ENCODE measurements at regions of chr17 and their contacts with region 1.

Region 1: GRCh38 chr17:29293890-29294579 is at the start of gene NUFIP2:
- DNase-seq: peak; percentile 98
- H3K4me3 Mint-ChIP-seq: peak within 1 kb of the TSS; percentile 99
- H3K27ac Mint-ChIP-seq: peak within 1 kb of the TSS; percentile 99
- H3K4me1 Mint-ChIP-seq: peaks cover 22% of the 10 kb centered on the region
- H3K27me3 Mint-ChIP-seq: no peaks in the 10 kb centered on the region
- total RNA-seq, gene NUFIP2: 83.3 and 85.7 TPM in 2 replicates

Region 2: DNA sequence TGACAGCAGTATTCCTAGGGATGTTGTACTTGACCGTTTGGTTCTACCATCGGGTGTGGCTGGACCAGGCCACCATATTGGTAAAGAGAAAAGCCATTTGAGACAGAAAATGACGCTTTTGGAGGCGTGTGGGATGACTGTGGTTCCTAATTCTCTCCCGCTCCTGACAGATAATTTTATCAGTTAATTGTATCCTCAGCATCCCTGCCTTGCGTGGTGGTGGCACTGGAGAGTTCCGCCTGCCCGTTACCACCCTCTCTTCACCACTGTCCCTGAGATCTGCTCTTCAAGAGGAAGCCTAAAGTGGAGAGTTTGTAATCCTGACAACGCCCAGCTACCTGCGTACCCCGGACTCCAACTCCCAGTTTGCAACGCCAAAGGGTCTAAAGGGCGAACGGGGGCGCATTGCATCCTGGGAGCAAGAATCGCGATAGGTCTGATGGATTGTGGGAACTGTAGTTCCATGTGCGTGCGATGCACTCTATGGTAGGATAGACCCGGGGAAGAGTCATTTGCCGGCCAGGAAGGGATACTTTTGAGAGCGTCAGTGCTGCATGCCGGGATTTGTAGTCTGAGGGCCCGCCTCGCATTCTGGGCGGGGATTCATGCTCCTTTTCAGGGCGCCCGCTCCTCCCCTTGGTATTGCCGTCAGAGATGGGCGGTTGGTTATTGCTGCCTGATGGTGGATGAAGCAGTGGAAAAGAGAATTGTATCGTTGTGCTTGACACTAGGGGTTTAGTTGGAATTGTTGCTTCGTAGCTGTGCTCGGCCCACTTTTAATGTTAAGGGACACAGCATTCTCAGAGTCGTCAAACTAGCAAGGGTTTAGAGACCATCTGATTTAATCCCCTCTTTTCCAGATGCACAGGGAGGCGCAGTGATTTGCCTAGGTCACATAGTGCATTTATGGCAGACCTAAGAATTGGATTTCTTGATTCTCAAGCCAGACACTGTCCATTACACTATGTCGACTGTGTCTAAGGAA is 341.8 kb before region 1 on chr17:
- intact Hi-C with region 1: loop called (anchors 1 kb)
- DNase-seq: peak; percentile 95
- H3K4me3 Mint-ChIP-seq: no peak overlapping the region
- H3K27ac Mint-ChIP-seq: no peak overlapping the region
- H3K4me1 Mint-ChIP-seq: peaks cover 9% of the 10 kb centered on the region
- H3K27me3 Mint-ChIP-seq: no peaks in the 10 kb centered on the region

Region 3: DNA sequence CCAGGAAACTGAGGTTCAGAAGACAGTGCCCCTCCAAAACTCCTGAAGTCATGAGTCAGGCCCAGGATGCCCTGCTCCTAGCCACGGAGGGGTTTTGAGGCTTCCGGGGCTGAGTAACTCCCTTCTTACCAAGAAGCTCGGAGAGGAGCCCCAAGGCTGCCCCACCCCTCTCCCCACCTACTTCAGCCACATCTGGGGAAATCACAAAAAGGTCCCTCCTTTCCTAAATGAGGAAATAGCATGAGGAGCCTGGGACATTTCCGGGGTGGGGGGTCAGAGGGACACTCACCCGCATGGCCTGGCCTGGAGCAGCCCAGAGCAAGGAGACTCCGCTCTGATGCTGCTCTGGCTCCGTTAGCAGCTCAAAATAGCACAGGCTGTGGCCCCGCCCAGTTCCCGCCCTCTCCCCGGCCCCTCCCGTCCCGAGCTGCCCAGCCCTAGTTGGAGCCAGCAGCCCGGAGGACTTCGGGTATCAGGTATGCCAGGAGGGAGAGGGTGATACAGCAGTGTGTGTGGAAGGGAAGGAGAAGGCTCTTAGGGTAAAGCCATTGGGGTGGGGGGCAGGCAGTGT is 153.9 kb before region 1 on chr17:
- intact Hi-C with region 1: loop called (anchors 2 kb)
- DNase-seq: peak; percentile 78
- H3K4me3 Mint-ChIP-seq: peak overlapping the region; percentile 89
- H3K27ac Mint-ChIP-seq: peak overlapping the region; percentile 99
- H3K4me1 Mint-ChIP-seq: peaks cover 63% of the 10 kb centered on the region
- H3K27me3 Mint-ChIP-seq: no peaks in the 10 kb centered on the region

Region 4: DNA sequence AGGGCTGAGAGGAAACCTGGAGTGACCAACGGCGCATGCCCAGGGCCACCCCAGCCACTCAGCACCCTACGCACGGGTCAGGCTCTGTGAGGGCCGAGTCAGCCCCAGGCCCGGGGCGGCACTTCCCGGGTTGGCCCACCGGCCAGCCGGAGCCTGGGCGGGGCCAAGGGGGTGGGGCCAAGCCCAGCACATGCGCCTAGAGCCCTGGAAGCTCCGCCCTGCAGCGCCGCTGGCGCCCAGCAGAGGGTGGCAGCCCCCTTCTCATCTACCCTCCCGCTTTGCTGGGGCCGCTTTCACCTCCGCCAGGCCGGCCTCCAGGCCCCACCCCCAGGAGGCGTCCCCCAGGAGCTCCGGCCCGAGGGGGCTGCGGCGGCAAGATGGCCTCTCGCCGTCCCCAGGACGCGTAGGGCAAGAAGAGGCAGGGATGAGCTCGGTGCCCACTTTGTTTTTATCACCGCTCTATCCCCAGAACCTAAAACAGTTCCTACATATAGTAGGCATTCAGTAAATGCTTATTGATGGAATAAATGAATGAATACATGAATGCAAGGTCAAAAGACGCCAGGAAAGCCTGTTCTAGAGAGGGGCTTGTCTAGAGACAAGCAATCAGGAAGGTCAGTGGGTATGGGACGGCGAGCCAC is 145.1 kb before region 1 on chr17:
- intact Hi-C with region 1: loop called (anchors 2 kb)
- DNase-seq: peak; percentile 91
- H3K4me3 Mint-ChIP-seq: peak overlapping the region; percentile 72
- H3K27ac Mint-ChIP-seq: peak overlapping the region; percentile 82
- H3K4me1 Mint-ChIP-seq: peaks cover 45% of the 10 kb centered on the region
- H3K27me3 Mint-ChIP-seq: no peaks in the 10 kb centered on the region

Region 5: DNA sequence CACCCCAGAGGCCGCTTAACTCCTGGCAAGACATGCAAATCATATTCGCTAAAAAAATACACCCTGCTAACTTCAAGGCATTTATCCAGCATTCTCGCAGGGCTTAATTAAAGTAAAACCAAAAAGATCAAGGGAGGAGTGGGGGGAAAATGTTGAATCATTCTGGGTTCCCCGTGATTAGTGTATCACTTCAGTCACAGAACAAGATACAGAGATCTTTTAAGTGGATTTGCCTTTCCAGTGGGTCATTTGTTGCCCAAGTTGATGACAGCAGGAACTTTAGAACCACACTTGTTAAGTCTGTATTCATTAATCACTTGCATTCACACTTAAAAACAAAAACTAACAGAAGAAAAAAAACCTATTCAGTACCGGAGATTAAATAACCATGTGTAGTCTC is 30.1 kb before region 1 on chr17:
- intact Hi-C with region 1: loop called (anchors 2 kb)
- DNase-seq: no peak
- H3K4me3 Mint-ChIP-seq: no peak overlapping the region
- H3K27ac Mint-ChIP-seq: no peak overlapping the region
- H3K4me1 Mint-ChIP-seq: peaks cover 15% of the 10 kb centered on the region
- H3K27me3 Mint-ChIP-seq: no peaks in the 10 kb centered on the region

Region 6: DNA sequence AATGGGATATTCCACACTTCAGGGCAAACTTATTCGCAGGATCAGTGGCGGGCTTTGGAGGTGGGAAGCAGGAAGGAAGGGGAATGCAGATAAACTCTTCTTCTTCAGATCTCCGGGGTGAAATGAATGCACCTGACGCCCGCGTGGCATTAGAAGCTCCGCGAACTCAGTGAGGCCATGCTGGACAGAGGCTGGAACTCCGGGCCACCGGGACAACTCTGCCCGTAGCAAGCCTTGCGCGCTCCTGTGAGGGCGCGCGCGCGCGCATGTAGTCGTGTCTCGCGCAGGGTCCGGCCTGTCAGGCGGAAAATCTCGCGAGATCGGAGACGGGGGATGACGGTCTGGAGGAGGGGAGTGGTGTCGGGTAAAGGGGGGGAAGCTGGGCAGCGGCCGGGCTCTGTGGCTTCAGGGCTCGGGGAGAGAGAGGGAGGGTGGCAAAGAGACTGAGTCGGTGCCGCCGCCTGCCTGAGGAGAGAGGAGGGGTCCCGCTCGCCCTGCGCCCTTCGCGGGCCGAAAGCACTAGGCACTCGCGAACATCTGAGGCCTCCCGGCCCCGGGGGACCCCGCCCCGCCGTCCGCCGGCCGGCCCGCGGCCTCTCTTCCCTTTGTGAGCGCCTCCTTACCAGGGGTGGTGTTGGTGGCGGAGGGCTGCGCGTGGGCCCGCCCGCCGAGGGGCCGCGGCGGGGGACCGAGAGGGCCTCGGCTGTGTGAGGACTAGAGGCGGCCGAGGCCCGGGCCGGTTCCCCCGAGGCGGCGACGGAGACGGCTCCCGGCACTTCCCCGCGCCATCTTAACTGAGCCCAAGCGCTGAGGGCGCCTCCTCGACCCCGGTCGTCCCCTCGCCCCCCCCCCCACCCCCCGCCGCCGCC is 96.2 kb after region 1 on chr17 and contains the start of gene TAOK1:
- intact Hi-C with region 1: loop called (anchors 5 kb)
- DNase-seq: peak; percentile 97
- H3K4me3 Mint-ChIP-seq: peak within 1 kb of the TSS; percentile 96
- H3K27ac Mint-ChIP-seq: peak within 1 kb of the TSS; percentile 89
- H3K4me1 Mint-ChIP-seq: peaks cover 28% of the 10 kb centered on the region
- H3K27me3 Mint-ChIP-seq: no peaks in the 10 kb centered on the region
- total RNA-seq, gene TAOK1: 41.9 and 47.9 TPM in 2 replicates

Region 7: DNA sequence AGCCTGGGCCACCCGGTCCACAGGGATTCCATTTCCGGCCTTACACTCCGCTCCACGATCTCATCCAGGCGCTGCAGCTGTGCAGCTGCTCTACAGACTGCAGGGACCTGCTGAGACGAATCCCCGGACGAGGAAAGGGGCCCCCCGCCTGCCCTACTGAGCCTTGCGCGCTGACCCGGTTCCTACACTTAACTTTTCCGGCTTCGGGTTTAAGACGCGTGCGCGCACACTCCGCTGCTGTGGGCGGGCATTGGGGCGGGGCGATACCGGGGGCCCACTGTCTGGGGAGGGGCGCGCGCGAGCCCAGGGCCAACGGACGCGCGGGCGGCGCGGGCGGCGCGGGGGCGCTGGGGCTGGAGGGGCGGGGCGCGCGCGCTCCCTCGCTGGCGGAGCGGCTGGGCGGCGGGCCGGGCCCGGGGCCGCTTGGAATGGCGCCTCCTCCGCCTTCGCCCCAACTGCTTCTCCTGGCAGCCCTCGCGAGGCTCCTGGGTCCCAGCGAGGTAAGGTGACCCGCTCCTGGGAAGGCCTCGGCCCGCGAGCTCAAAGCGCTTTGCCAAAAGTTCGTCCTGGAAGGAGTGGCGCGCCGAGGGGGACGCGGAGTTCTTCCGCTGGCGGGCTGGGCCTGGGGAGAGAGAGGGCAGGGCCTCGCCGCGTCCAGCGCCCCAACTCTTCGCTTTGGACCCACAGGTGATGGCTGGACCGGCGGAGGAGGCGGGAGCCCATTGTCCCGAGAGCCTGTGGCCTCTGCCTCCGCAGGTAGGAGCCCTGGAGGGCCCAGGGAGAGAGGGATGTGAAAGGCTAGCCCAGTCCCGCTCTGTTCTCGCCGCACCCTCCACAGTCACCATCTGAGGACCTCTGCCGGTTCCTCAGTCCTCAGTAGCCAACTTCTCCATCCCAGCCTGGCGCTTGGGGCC is 274.6 kb after region 1 on chr17 and contains the start of gene TP53I13:
- intact Hi-C with region 1: loop called (anchors 5 kb)
- DNase-seq: peak; percentile 85
- H3K4me3 Mint-ChIP-seq: peak within 1 kb of the TSS; percentile 94
- H3K27ac Mint-ChIP-seq: peak within 1 kb of the TSS; percentile 96
- H3K4me1 Mint-ChIP-seq: peaks cover 25% of the 10 kb centered on the region
- H3K27me3 Mint-ChIP-seq: no peaks in the 10 kb centered on the region
- total RNA-seq, gene TP53I13: 78.2 and 84.8 TPM in 2 replicates

Measured in activated T-helper 2 cell treated with anti-CD3 and anti-CD28 coated beads, Interferon-gamma antibody, Interleukin-2, Interleukin-4, amounts not matched to agents 10 μg/mL and 5 μg/mL and 100 μg/mL, durations not matched to agents 14 hours and 24 hours and 36 hours (primary cell).